Calu3 (cell line): ENCODE measurements at regions of chr1 and their contacts with region 1.

Region 1: DNA sequence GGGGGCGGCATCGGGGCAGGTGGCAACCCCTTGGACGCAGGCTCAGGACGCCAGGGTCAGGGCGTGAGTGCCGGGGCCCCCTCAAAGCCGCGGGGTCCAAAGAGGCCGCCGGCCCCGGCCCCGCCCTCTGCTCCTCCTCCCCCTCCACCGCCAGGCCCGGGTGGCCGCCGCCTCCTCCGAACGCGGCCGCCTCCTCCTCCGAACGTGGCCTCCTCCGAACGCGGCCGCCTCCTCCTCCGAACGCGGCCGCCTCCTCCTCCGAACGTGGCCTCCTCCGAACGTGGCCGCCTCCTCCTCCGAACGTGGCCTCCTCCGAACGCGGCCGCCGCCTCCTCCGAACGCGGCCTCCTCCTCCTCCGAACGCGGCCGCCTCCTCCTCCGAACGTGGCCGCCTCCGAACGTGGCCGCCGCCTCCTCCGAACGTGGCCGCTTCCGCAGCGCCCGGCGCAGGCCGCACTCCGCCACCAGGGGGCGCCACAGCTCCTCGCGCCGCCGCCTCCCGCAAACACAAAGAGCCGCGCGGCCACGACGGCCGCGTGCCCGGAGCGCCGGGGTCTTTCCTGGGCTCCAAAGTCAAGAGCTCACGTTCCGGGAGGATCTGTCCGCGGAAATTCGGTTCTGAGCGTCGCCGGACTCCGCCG is 19.3 kb upstream of the SAMD11 start:
- DNase-seq: peak; percentile 84
- H3K4me3 Mint-ChIP-seq: peak overlapping the region; percentile 72
- H3K27ac Mint-ChIP-seq: no peak overlapping the region
- H3K4me1 Mint-ChIP-seq: no peaks in the 10 kb centered on the region
- H3K27me3 Mint-ChIP-seq: peaks cover 44% of the 10 kb centered on the region
- CTCF ChIP-seq: peak; percentile 79

Region 2: GRCh38 chr1:938088-938683 is 33.8 kb after region 1 on chr1:
- CTCF ChIA-PET with region 1: interaction called, 13 read pairs
- intact Hi-C with region 1: no loop called
- DNase-seq: peak; percentile 79
- H3K4me3 Mint-ChIP-seq: no peak overlapping the region
- H3K27ac Mint-ChIP-seq: peak overlapping the region; percentile 30
- H3K4me1 Mint-ChIP-seq: peaks cover 21% of the 10 kb centered on the region
- H3K27me3 Mint-ChIP-seq: peaks cover 27% of the 10 kb centered on the region
- CTCF ChIP-seq: peak; percentile 69

Region 3: DNA sequence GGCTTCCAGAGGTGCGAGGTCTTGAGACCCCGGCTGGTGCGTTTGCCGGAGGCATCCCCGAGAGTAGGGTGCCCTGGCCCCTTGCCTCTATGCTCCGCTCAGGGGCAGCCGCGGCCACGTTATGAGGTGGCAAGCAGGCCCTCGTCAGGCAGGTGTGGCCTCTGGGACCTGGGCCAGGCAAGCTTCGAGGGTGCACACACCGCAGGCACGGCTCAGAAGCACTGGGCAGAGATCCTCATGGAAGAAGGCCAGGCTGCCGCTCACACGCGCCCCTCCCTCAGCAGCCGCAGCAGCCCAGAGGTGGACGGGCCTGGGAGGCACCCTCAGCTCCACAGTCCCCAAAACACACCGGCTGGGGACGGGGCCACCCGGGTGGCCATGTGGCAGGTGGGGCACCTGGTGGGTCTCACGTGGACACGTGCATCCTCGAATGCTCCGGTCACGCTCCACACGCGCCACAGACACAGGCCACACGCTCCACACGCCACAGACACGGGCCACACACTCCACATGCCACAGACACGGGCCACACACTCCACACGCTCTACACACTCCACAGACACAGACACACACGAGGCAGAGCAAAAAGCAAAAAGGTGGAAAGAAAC is 320.9 kb after region 1 on chr1:
- CTCF ChIA-PET with region 1: no interaction called
- intact Hi-C with region 1: no loop called
- DNase-seq: no peak
- H3K4me3 Mint-ChIP-seq: no peak overlapping the region
- H3K27ac Mint-ChIP-seq: no peak overlapping the region
- H3K4me1 Mint-ChIP-seq: peaks cover 8% of the 10 kb centered on the region
- H3K27me3 Mint-ChIP-seq: no peaks in the 10 kb centered on the region
- CTCF ChIP-seq: no peak